CD8-positive, alpha-beta T cell (primary cell): ENCODE measurements at regions of chr9 and their contacts with region 1.

Region 1: DNA sequence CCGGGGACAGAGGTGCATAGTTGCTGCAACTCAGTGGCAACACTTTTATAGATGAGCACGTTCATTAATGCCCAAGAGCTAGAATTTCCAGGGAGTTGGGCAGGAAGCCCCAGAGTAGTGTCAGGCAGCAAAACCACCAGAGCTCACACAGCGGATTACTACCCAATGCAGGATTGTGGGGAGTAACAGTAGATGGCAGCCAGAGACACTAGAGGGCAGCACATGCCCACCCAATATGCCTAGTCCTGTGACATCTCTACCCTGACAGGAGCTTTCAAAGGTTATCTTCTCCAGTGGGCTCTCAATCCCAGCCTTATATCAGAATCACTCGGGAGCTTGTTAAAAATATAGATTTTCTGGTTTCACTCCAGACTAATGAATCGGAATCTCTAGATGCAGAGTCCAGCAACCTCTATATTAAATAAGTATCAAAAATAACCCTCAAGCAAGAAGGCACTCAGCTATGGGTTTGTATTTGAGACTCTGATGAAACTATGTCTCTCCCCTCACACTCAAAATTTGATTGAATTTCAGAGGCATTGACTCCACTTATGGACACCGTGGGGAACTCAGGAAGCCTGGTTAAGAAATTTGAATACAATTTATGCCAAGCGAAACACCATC is 58.4 kb upstream of the PHF24 start:
- DNase-seq: peak; percentile 64 to 87 (median 80)
- ATAC-seq: peak; percentile 99
- H3K4me3 ChIP-seq: no peak overlapping the region
- H3K4me3 Mint-ChIP-seq: no peak overlapping the region
- H3K27ac ChIP-seq: no peak overlapping the region
- H3K27ac Mint-ChIP-seq: no peak overlapping the region
- H3K4me1 ChIP-seq: no peaks in the 10 kb centered on the region
- H3K4me1 Mint-ChIP-seq: no peaks in the 10 kb centered on the region
- H3K27me3 ChIP-seq: no peaks in the 10 kb centered on the region
- H3K27me3 Mint-ChIP-seq: peaks cover 31% of the 10 kb centered on the region
- CTCF ChIP-seq: peak; percentile 81

Region 2: GRCh38 chr9:35051069-35051967 is 151.7 kb after region 1 on chr9:
- CTCF ChIA-PET with region 1: interaction called, 36 read pairs
- POLR2A ChIA-PET with region 1: interaction called, 3 read pairs
- intact Hi-C with region 1: loop called (anchors 1 kb)
- DNase-seq: peak in 8 of 9 experiments; percentile 19 to 65 (median 48)
- ATAC-seq: peak; percentile 84
- H3K4me3 ChIP-seq: no peak overlapping the region
- H3K4me3 Mint-ChIP-seq: no peak overlapping the region
- H3K27ac ChIP-seq: no peak overlapping the region
- H3K27ac Mint-ChIP-seq: peak overlapping the region; percentile 15
- H3K4me1 ChIP-seq: no peaks in the 10 kb centered on the region
- H3K4me1 Mint-ChIP-seq: peaks cover 4% of the 10 kb centered on the region
- H3K27me3 ChIP-seq: no peaks in the 10 kb centered on the region
- H3K27me3 Mint-ChIP-seq: no peaks in the 10 kb centered on the region
- CTCF ChIP-seq: peak; percentile 78

Region 3: GRCh38 chr9:35096035-35096849 is 196.6 kb after region 1 on chr9 and contains the start of gene PIGO:
- CTCF ChIA-PET with region 1: interaction called, 70 read pairs
- POLR2A ChIA-PET with region 1: interaction called, 7 read pairs
- intact Hi-C with region 1: loop called (anchors 1 kb)
- DNase-seq: peak; percentile 78 to 94 (median 89)
- ATAC-seq: peak; percentile 90
- H3K4me3 ChIP-seq: peak within 1 kb of the TSS; percentile 95 to 99
- H3K4me3 Mint-ChIP-seq: peak within 1 kb of the TSS; percentile 88
- H3K27ac ChIP-seq: peak within 1 kb of the TSS; percentile 95 to 100
- H3K27ac Mint-ChIP-seq: peak within 1 kb of the TSS; percentile 95
- H3K4me1 ChIP-seq: peaks cover 24% of the 10 kb centered on the region
- H3K4me1 Mint-ChIP-seq: peaks cover 32% of the 10 kb centered on the region
- H3K27me3 ChIP-seq: no peaks in the 10 kb centered on the region
- H3K27me3 Mint-ChIP-seq: no peaks in the 10 kb centered on the region
- CTCF ChIP-seq: peak; percentile 75
- total RNA-seq, gene PIGO: 15.1 to 16.4 TPM

Region 4: DNA sequence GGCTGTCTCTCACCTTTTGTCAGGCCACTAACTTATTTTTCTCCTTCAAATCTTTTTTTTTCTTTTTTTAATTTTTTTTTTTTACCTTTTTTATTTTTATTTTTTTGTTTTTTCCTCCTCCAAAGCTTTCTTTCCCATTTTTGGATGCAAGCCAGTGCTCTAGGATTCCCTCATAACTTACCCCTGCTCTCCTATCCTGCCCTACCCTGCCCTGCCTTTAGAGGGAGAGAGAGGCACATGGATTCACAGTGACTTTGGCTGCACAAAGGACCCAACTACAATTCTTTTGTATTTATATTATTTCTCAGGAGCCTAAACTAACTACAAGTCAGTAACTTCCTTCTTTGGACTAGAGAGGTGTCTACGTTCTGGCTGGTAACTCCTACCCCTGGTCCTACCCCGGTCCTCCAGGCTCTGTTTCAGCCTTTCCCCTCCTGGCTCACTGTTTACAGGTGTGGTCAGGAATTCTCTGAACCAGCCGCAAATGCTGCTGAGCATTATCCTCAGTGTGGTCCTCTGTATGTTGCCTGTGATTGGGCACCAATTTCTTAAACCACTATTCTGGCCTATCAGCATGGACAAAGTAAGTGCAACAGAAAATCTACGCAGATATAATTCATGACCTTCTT is 581.8 kb after region 1 on chr9:
- CTCF ChIA-PET with region 1: interaction called, 21 read pairs
- POLR2A ChIA-PET with region 1: no interaction called
- intact Hi-C with region 1: loop called (anchors 1 kb)
- DNase-seq: peak in 2 of 9 experiments; percentile 13 to 26
- ATAC-seq: peak; percentile 40
- H3K4me3 ChIP-seq: no peak overlapping the region
- H3K4me3 Mint-ChIP-seq: no peak overlapping the region
- H3K27ac ChIP-seq: no peak overlapping the region
- H3K27ac Mint-ChIP-seq: no peak overlapping the region
- H3K4me1 ChIP-seq: no peaks in the 10 kb centered on the region
- H3K4me1 Mint-ChIP-seq: no peaks in the 10 kb centered on the region
- H3K27me3 ChIP-seq: peaks cover 2 to 6% of the 10 kb centered on the region in 2 experiments
- H3K27me3 Mint-ChIP-seq: peaks cover 5% of the 10 kb centered on the region
- CTCF ChIP-seq: peak; percentile 22